Adrenal gland (tissue), 19 donors: ENCODE measurements at regions of chrX and their contacts with region 1.

Region 1: DNA sequence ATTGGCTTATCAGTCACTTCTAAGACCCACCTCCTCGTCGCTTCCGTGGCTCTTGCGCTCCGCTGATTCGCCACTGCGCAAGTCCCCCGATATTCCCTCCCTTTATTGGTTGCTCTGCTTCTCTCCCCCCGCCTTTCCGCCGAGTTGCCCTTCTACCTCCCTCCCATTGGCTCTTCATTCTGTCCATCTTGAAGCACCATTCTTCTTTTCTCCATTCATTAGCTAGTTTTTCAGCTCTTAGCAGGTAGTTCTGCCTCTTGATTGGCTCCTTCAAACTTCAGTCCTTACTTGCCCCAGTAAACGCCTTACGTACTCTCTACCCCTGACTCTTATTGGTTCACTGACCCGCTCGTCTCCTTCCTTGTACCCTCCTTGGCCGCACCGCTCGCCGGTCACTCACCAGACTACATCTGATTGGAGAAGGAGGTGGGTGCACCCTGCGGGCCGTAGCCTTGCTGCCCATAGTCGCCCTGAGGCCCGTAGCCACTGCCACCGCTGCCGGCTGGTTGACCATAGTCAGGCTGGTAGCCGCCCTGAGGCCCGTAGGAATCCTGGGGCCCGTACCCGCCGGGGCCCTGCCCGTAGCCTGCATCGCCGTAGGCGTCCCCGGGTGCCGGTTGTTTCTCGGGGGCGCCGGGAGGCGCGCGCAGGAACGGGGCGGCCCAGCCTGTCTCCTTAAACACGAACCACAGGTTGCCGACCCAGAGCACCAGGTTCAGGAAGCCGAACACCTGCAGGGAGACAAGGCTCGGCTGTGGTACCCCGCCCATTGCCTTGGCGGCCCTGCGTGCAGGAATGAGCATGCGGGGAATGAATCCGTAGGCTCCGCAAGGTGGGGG is 5.1 kb upstream of the PRICKLE3 start:
- DNase-seq: peak; percentile 91 to 98 (median 94)
- H3K4me3 ChIP-seq: peak overlapping the region; percentile 32 to 71 (median 60)
- H3K27ac ChIP-seq: peak overlapping the region; percentile 75 to 91 (median 83)
- H3K4me1 ChIP-seq: no peaks in the 10 kb centered on the region
- H3K27me3 ChIP-seq: no peaks in the 10 kb centered on the region
- CTCF ChIP-seq: no peak
- POLR2A ChIP-seq: peak; percentile 70 to 92

Region 2: GRCh38 chrX:49155900-49156837 is 35.1 kb before region 1 on chrX:
- intact Hi-C with region 1: loop called in 1 of 2 experiments (anchors 5 kb)
- DNase-seq: peak; percentile 84 to 93 (median 87)
- H3K4me3 ChIP-seq: peak overlapping the region in 2 of 4 donors; percentile 14 to 64
- H3K27ac ChIP-seq: peak overlapping the region; percentile 59 to 99 (median 89)
- H3K4me1 ChIP-seq: no peaks in the 10 kb centered on the region
- H3K27me3 ChIP-seq: no peaks in the 10 kb centered on the region
- CTCF ChIP-seq: peak; percentile 45 to 84 (median 66)
- POLR2A ChIP-seq: peak; percentile 29 to 33